Activated CD8-positive, alpha-beta memory T cell treated with anti-CD3 and anti-CD28 coated beads, Interleukin-2, amount 10 ng/mL, durations not matched to agents 7 days and 5 days (primary cell): ENCODE measurements at regions of chr14 and their contacts with region 1.

Region 1: GRCh38 chr14:49633640-49634546 is 1.2 kb downstream of the DNAAF2 start:
- DNase-seq: peak; percentile 96
- ATAC-seq: peak; percentile 83
- H3K4me3 Mint-ChIP-seq: peak overlapping the region; percentile 87
- H3K27ac Mint-ChIP-seq: peak overlapping the region; percentile 94
- H3K4me1 Mint-ChIP-seq: peaks cover 47% of the 10 kb centered on the region
- H3K27me3 Mint-ChIP-seq: no peaks in the 10 kb centered on the region

Region 2: DNA sequence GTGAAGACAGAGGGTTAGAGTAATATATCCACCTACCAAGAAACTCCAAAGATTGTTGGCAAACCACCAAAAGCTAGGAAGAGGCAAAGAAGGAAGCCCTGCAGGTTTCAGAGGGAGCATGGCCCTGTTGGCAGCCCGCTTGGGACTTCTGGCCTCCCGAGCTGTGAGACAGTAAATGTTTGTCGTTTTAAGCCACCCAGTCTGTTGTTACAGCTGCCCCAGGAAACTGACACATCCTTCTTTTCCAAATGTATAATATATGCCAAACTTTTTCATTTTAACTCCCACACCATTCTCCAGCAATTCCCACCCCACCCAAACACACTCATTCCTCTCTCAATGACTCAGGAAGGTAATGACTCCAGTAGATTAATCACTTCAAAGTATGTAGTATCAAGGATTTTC is 121.7 kb before region 1 on chr14:
- CTCF ChIA-PET with region 1: no interaction called
- DNase-seq: no peak
- ATAC-seq: no peak
- H3K4me3 Mint-ChIP-seq: no peak overlapping the region
- H3K27ac Mint-ChIP-seq: no peak overlapping the region
- H3K4me1 Mint-ChIP-seq: no peaks in the 10 kb centered on the region
- H3K27me3 Mint-ChIP-seq: peaks cover 4% of the 10 kb centered on the region

Region 3: GRCh38 chr14:49687942-49688700 is 54.2 kb after region 1 on chr14 and contains the start of gene POLE2:
- CTCF ChIA-PET with region 1: interaction called, 10 read pairs
- DNase-seq: peak; percentile 86
- ATAC-seq: peak; percentile 88
- H3K4me3 Mint-ChIP-seq: peak within 1 kb of the TSS; percentile 87
- H3K27ac Mint-ChIP-seq: peak within 1 kb of the TSS; percentile 91
- H3K4me1 Mint-ChIP-seq: peaks cover 42% of the 10 kb centered on the region
- H3K27me3 Mint-ChIP-seq: no peaks in the 10 kb centered on the region
- total RNA-seq, gene POLE2: 39.9 to 40.2 TPM

Region 4: DNA sequence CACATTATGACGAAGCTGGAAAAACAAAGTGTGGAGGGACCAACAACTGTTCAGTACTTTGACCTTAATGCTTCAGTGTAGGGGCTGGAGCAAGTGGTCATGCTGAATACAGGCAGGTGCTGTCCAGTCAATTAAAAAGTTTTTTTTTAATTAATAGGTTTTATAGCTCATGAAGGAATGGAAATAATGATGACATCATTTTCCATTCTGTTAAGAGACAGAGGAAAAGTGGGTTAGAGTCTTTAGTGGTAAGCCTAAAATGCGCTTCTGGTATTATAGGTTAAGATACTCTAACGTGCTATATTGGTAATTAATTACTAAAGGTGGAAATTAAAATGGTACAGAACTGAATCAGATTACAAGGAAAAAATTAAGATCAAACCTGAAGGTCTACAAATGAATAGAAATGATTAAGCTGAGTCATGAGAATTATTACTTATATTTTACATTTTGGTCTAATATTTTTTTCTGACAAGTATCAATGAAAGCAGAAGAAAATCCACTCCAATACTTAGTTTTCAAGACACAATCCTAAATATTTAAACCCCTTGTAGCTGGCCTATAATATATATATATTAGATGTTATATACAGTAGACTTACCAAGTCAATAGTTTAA is 149.6 kb after region 1 on chr14:
- CTCF ChIA-PET with region 1: interaction called, 21 read pairs
- DNase-seq: no peak
- ATAC-seq: no peak
- H3K4me3 Mint-ChIP-seq: no peak overlapping the region
- H3K27ac Mint-ChIP-seq: no peak overlapping the region
- H3K4me1 Mint-ChIP-seq: no peaks in the 10 kb centered on the region
- H3K27me3 Mint-ChIP-seq: no peaks in the 10 kb centered on the region

Region 5: GRCh38 chr14:49828640-49829039 is 194.7 kb after region 1 on chr14:
- CTCF ChIA-PET with region 1: interaction called, 26 read pairs
- DNase-seq: no peak
- ATAC-seq: no peak
- H3K4me3 Mint-ChIP-seq: no peak overlapping the region
- H3K27ac Mint-ChIP-seq: no peak overlapping the region
- H3K4me1 Mint-ChIP-seq: peaks cover 6% of the 10 kb centered on the region
- H3K27me3 Mint-ChIP-seq: no peaks in the 10 kb centered on the region

Region 6: DNA sequence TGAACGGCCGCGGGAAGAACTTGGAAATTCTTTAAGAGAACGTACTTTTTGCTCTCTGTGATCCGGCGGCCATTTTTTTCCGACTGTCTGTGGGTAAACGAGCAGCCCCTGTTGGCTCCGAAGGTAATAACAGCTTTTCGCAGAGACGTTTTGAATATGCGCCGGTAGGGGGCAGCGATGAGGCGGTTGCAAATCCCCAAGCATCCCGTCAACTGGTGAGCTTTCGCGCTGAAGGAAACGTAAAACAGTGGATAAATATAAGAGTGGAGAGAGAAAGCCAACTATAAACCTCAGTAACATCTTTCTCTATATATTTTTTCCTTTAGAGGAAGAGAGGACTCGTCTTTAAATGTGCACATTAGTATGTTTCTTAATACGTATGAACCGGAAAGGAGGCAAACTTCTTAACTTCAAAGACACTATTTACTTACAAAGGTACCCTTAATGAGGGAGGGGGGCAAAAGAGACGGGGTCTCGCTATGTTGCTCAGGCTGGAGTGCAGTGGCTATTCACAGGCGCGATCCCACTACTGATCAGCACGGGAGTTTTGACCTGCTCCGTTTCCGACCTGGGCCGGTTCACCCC is 228.3 kb after region 1 on chr14:
- CTCF ChIA-PET with region 1: interaction called, 13 read pairs
- DNase-seq: peak; percentile 93
- ATAC-seq: peak; percentile 10
- H3K4me3 Mint-ChIP-seq: no peak overlapping the region
- H3K27ac Mint-ChIP-seq: no peak overlapping the region
- H3K4me1 Mint-ChIP-seq: peaks cover 32% of the 10 kb centered on the region
- H3K27me3 Mint-ChIP-seq: no peaks in the 10 kb centered on the region